ENCODE measurements at regions of chr3 and their contacts with region 1.

Region 1: DNA sequence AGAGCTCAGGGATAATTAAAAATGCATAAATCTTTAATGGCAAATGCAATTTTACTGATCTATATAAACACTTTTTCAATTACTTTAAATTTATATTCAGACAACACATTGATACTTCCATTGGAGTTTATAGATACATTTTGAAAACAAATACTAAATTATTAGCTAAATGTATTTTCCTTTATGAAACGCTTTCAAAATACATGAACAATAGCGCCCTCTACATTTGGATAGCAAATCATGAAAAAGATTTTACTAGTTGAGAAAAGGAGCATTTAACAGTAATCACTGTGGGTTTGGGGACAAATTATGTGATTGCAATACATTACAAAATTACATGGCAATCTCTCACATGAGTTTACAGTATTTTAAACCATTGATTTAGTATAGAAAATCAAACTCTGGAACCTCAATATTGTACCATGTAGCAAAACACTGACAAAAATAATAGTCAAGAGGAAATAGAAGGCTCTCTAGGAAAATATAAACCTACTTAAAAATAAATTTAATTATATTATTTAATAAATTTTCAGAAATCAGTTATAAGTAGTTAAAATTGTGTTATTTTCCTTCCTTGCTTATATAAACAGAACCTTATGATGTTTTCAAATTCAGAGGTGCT is 207.9 kb downstream of the ZIC1 start:
- DNase-seq: peak; percentile 13
- H3K4me3 ChIP-seq: no peak overlapping the region
- H3K27ac ChIP-seq: no peak overlapping the region
- H3K4me1 ChIP-seq: no peaks in the 10 kb centered on the region
- H3K27me3 ChIP-seq: peaks cover 0 to 1% of the 10 kb centered on the region in 2 experiments
- CTCF ChIP-seq: peak; percentile 7 to 28
- POLR2A ChIP-seq: no peak

Region 2: DNA sequence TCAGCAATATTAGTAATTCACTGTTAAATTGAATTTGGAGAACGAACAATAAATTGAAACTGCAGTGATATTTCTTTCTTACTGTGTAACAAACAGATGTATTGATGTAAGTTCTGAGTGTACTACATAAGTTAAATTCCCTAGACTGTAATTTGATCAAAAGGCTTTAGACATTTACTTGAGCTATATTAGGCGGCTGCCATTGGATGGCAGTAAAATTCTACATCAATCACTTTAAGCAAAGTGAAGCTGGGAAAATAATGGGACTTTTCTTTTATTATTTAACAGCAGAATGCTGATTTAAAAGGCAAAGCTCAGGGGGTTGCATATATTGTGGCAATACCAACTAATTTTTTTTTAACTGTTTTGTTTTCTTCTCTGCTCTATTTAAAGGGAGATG is 799.4 kb before region 1 on chr3:
- CTCF ChIA-PET with region 1: interaction called, 18 read pairs
- POLR2A ChIA-PET with region 1: no interaction called
- dilution Hi-C with region 1: no loop called
- intact Hi-C with region 1: loop called (anchors 10 kb)
- DNase-seq: peak; percentile 43
- H3K4me3 ChIP-seq: no peak overlapping the region
- H3K27ac ChIP-seq: no peak overlapping the region
- H3K4me1 ChIP-seq: no peaks in the 10 kb centered on the region
- H3K27me3 ChIP-seq: no peaks in the 10 kb centered on the region
- CTCF ChIP-seq: peak in 1 of 2 donors; percentile 31
- POLR2A ChIP-seq: no peak

Region 3: GRCh38 chr3:147361454-147362420 is 255.4 kb before region 1 on chr3:
- CTCF ChIA-PET with region 1: interaction called, 10 read pairs
- POLR2A ChIA-PET with region 1: no interaction called
- dilution Hi-C with region 1: no loop called
- intact Hi-C with region 1: no loop called
- DNase-seq: no peak
- H3K4me3 ChIP-seq: no peak overlapping the region
- H3K27ac ChIP-seq: no peak overlapping the region
- H3K4me1 ChIP-seq: no peaks in the 10 kb centered on the region
- H3K27me3 ChIP-seq: peaks cover 78 to 98% of the 10 kb centered on the region in 2 experiments
- CTCF ChIP-seq: peak; percentile 57 to 73
- POLR2A ChIP-seq: no peak

Region 4: GRCh38 chr3:147449669-147450068 is 167.4 kb before region 1 on chr3:
- CTCF ChIA-PET with region 1: interaction called, 3 read pairs
- POLR2A ChIA-PET with region 1: no interaction called
- dilution Hi-C with region 1: no loop called
- intact Hi-C with region 1: loop called (anchors 10 kb)
- DNase-seq: no peak
- H3K4me3 ChIP-seq: no peak overlapping the region
- H3K27ac ChIP-seq: no peak overlapping the region
- H3K4me1 ChIP-seq: no peaks in the 10 kb centered on the region
- H3K27me3 ChIP-seq: peaks cover 0 to 13% of the 10 kb centered on the region in 2 experiments
- CTCF ChIP-seq: no peak
- POLR2A ChIP-seq: no peak

Region 5: DNA sequence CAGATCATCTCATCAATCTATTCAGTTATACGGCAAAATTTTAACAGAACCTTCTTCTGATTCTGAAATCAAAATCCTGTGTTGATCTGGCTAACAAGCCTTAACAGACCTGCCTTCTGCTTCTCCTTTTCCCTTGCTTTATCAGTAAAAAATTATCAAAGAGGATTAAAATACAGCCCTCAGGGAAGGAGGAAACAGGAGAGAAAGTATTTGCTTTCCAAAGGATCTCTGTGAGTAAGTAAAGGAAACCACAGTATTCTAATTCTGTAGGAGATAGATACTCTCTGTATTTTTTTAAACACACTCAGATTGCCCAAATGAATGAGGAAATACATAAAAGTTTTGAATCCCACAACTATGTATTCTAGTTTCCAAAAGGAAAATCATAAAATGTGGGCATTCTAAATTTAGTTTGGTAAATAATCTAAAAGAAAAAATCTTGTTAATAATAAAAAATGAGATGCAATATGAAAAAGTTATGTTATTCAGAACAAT is 13.9 kb after region 1 on chr3:
- CTCF ChIA-PET with region 1: interaction called, 23 read pairs
- POLR2A ChIA-PET with region 1: no interaction called
- dilution Hi-C with region 1: no loop called
- intact Hi-C with region 1: no loop called
- DNase-seq: no peak
- H3K4me3 ChIP-seq: no peak overlapping the region
- H3K27ac ChIP-seq: no peak overlapping the region
- H3K4me1 ChIP-seq: no peaks in the 10 kb centered on the region
- H3K27me3 ChIP-seq: peaks cover 0 to 3% of the 10 kb centered on the region in 2 experiments
- CTCF ChIP-seq: no peak
- POLR2A ChIP-seq: no peak

Region 6: DNA sequence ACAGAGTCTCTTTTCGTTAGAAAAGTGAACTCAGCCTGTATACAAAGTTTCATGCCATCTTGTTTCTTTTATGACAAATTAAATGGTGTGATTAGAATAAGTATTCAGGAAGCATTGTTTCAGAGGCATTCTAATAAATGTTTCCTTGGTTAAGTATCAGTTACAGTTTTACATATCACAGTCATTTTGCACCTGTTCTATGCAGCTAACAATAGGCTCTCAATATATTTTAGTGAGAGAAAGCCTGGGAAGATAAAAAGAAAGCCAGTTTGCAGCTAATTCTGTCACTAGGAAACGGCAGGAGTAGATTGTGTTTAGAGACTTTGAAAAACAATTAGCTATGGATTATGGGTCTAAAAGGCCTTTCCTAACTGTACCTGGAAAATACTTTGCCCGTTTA is 44.8 kb after region 1 on chr3:
- CTCF ChIA-PET with region 1: interaction called, 10 read pairs
- POLR2A ChIA-PET with region 1: no interaction called
- dilution Hi-C with region 1: no loop called
- intact Hi-C with region 1: no loop called
- DNase-seq: no peak
- H3K4me3 ChIP-seq: no peak overlapping the region
- H3K27ac ChIP-seq: no peak overlapping the region
- H3K4me1 ChIP-seq: no peaks in the 10 kb centered on the region
- H3K27me3 ChIP-seq: no peaks in the 10 kb centered on the region
- CTCF ChIP-seq: no peak
- POLR2A ChIP-seq: no peak

Measured in endothelial cell of umbilical vein (primary cell).